ENCODE measurements at regions of chr17 and their contacts with region 1.

Region 1: GRCh38 chr17:57975044-57975443 is 13.0 kb downstream of the VEZF1 start:
- DNase-seq: no peak
- CTCF ChIP-seq: no peak

Region 2: GRCh38 chr17:57987580-57988421 is 12.8 kb after region 1 on chr17 and contains the start of gene VEZF1:
- CTCF ChIA-PET with region 1: interaction called, 10 read pairs
- POLR2A ChIA-PET with region 1: interaction called, 8 read pairs
- DNase-seq: peak; percentile 86
- CTCF ChIP-seq: no peak

Region 3: GRCh38 chr17:58020401-58020800 is 45.4 kb after region 1 on chr17:
- CTCF ChIA-PET with region 1: no interaction called
- POLR2A ChIA-PET with region 1: no interaction called
- DNase-seq: no peak
- CTCF ChIP-seq: no peak